ENCODE measurements at regions of chr21 and their contacts with region 1.

Region 1: DNA sequence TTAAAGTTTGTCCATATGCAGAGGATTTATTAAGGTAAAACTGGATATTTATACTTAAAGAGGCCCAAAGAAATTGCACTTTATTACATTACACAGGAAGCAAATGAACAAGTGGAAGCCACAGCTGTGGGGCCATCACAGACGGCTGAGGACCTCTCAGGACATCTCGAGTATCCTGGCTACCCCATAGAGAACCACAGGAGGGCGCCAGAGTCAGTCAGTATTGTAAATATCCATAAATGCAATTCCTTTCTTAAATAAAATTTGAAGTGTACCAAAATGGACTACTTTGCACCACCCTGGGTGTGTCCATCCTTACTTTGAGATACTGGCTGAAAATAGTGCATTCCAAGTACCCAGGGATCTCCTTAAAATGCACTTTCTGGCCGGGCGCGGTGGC is 257.2 kb downstream of the MRPL39 start:
- DNase-seq: peak in 3 of 4 experiments; percentile 11 to 18 (median 16)
- ATAC-seq: no peak
- H3K4me3 ChIP-seq: no peak overlapping the region
- H3K27ac ChIP-seq: no peak overlapping the region
- H3K4me1 ChIP-seq: no peaks in the 10 kb centered on the region
- H3K27me3 ChIP-seq: no peaks in the 10 kb centered on the region
- CTCF ChIP-seq: peak; percentile 19 to 22 (median 22); a peak in 2 of 6 replicates
- EP300 ChIP-seq: no peak
- POLR2A ChIP-seq: no peak
- RAD21 ChIP-seq: no peak

Region 2: GRCh38 chr21:25371841-25372425 is 21.9 kb after region 1 on chr21:
- CTCF ChIA-PET with region 1: no interaction called
- POLR2A ChIA-PET with region 1: no interaction called
- in situ Hi-C with region 1: no loop called
- intact Hi-C with region 1: loop called (anchors 1 kb)
- DNase-seq: no peak
- ATAC-seq: no peak
- H3K4me3 ChIP-seq: no peak overlapping the region
- H3K27ac ChIP-seq: no peak overlapping the region
- H3K4me1 ChIP-seq: no peaks in the 10 kb centered on the region
- H3K27me3 ChIP-seq: no peaks in the 10 kb centered on the region
- CTCF ChIP-seq: no peak
- EP300 ChIP-seq: no peak
- POLR2A ChIP-seq: no peak
- RAD21 ChIP-seq: no peak

Region 3: DNA sequence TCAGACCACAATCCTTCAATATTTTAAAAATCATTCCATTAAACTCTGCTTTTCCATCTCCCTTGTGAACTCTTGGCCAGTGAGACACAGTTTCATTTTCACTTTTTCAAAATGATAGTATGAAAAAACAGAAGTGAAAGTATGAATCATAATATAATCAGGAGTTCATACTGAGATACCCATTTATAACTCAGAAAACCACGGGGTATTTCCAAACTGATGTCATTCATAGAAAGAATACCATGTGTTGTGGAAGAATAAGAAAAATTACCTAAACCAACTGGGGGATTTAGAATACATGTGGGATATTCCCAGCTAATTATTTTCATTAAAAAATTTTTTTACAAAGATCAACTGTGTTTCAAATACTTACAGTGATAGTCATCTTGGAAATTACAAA is 107.4 kb after region 1 on chr21:
- CTCF ChIA-PET with region 1: no interaction called
- POLR2A ChIA-PET with region 1: no interaction called
- in situ Hi-C with region 1: no loop called
- intact Hi-C with region 1: no loop called
- DNase-seq: no peak
- ATAC-seq: no peak
- H3K4me3 ChIP-seq: no peak overlapping the region
- H3K27ac ChIP-seq: no peak overlapping the region
- H3K4me1 ChIP-seq: no peaks in the 10 kb centered on the region
- H3K27me3 ChIP-seq: no peaks in the 10 kb centered on the region
- CTCF ChIP-seq: no peak
- EP300 ChIP-seq: no peak
- POLR2A ChIP-seq: no peak
- RAD21 ChIP-seq: no peak